Activated naive CD4-positive, alpha-beta T cell treated with anti-CD3 and anti-CD28 coated beads for 36 hours (primary cell): ENCODE measurements at regions of chr5 and their contacts with region 1.

Region 1: GRCh38 chr5:175517818-175518450 is 39.6 kb downstream of the SFXN1 start:
- DNase-seq: peak; percentile 95
- H3K4me3 Mint-ChIP-seq: peak overlapping the region; percentile 59
- H3K27ac Mint-ChIP-seq: peak overlapping the region; percentile 99
- H3K4me1 Mint-ChIP-seq: peaks cover 87% of the 10 kb centered on the region
- H3K27me3 Mint-ChIP-seq: no peaks in the 10 kb centered on the region

Region 2: GRCh38 chr5:175466700-175467318 is 51.1 kb before region 1 on chr5:
- CTCF ChIA-PET with region 1: no interaction called
- intact Hi-C with region 1: no loop called
- DNase-seq: no peak
- H3K4me3 Mint-ChIP-seq: no peak overlapping the region
- H3K27ac Mint-ChIP-seq: no peak overlapping the region
- H3K4me1 Mint-ChIP-seq: peaks cover 22% of the 10 kb centered on the region
- H3K27me3 Mint-ChIP-seq: no peaks in the 10 kb centered on the region

Region 3: DNA sequence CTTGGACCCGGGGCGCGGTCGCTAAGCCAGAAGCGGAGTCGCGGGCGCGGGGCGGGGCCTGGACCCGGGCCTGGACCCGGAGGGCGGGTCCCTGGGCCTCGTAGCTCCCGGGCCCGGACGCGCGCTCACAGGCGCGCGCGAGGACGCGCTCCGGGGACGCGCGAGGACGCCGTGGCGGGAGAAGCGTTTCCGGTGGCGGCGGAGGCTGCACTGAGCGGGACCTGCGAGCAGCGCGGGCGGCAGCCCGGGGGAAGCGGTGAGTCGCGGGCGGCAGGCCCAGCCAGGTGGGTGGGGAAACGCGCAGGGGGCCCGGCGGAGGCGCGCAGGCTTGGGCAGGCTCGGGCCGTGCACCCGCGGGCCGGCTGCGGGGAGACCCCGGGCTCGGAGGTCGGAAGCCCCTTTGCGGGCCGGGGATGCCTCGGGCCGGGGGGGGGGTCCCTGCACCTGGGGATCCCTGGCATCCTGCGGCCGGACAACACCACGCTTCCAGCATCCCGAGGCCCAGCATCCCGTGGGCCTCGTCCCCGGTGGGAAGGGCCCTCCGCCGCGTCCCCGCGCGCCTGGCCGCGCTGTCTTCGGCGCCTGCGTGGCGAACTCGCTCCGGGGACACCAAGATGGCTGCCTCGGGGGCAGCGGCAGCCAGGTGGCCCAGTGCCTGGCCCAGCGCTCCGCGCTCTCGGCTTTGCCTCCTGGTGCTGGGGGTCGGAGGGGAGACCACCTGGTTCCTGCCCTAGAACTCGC is 39.4 kb before region 1 on chr5 and contains the start of gene SFXN1:
- CTCF ChIA-PET with region 1: interaction called, 9 read pairs
- intact Hi-C with region 1: loop called (anchors 1 kb)
- DNase-seq: peak; percentile 86
- H3K4me3 Mint-ChIP-seq: peak within 1 kb of the TSS; percentile 94
- H3K27ac Mint-ChIP-seq: peak within 1 kb of the TSS; percentile 97
- H3K4me1 Mint-ChIP-seq: peaks cover 56% of the 10 kb centered on the region
- H3K27me3 Mint-ChIP-seq: no peaks in the 10 kb centered on the region
- total RNA-seq, gene SFXN1: 350 to 358 TPM

Region 4: DNA sequence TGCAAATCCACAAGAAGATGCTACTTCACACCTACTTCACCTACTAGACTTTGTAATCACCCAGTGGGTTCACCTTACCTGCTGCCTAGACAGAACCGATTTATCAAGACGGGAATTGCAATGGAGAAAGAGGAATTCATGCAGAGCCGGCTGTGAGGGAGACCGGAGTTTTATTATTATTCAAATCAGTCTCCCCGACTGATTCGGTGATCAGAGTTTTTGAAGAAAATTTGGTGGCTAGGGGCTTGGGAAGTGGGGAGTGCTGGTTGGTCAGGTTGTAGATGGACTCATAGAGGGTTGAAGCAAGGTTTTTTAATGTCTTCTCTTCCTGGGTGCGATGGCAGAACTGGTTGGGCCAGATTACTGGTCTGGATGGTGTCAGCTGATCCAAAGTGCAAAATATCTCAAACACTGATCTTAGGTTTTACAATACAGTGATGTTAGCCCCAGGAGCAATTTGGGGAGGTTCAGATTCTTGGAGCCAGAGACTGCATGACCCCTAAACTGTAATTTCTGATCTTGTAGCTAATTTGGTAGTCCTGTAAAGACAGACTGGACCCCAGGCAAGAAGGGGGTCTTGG is 16.1 kb before region 1 on chr5:
- CTCF ChIA-PET with region 1: no interaction called
- intact Hi-C with region 1: loop called (anchors 1 kb)
- DNase-seq: no peak
- H3K4me3 Mint-ChIP-seq: no peak overlapping the region
- H3K27ac Mint-ChIP-seq: peak overlapping the region; percentile 61
- H3K4me1 Mint-ChIP-seq: peaks cover 63% of the 10 kb centered on the region
- H3K27me3 Mint-ChIP-seq: no peaks in the 10 kb centered on the region

Region 5: DNA sequence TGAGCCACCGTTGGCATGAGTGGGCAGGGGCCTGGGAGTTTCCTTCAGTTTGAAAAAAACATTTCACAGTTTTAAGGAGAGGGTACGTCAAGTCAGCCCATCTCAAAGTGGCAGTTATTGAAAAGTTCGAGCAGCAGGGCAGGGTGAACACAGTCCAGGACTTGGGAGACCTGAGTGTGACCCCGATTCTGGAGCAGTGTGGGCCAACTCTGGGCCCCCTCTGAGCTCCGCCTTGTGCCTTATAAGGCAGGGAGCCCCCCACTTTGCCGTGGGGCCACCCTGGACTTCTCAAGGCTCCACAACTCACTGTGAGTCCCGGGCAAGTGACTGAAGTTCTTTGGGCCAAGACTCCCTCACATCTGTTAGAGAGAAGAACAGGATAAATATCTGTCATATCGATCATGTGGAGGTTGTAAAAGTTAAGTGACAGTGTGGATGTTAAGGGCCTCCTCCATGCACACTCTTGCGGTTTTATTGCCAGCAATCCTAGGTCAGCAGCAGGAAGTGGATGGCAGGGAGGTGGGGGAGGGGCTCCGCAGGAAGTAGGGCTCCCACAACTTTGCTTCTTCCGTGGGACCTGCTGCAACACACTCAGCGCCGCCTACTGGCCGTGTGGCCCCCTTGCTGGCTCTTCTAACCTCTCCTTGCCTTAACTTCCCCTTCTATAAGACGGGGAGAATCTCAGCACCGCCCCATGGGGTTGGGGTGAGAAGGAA is 178.4 kb after region 1 on chr5:
- CTCF ChIA-PET with region 1: interaction called, 3 read pairs
- intact Hi-C with region 1: loop called (anchors 1 kb)
- DNase-seq: peak; percentile 95
- H3K4me3 Mint-ChIP-seq: peak overlapping the region; percentile 74
- H3K27ac Mint-ChIP-seq: peak overlapping the region; percentile 95
- H3K4me1 Mint-ChIP-seq: peaks cover 29% of the 10 kb centered on the region
- H3K27me3 Mint-ChIP-seq: no peaks in the 10 kb centered on the region